K562 (cell line): ENCODE measurements at regions of chr5 and their contacts with region 1.

Region 1: DNA sequence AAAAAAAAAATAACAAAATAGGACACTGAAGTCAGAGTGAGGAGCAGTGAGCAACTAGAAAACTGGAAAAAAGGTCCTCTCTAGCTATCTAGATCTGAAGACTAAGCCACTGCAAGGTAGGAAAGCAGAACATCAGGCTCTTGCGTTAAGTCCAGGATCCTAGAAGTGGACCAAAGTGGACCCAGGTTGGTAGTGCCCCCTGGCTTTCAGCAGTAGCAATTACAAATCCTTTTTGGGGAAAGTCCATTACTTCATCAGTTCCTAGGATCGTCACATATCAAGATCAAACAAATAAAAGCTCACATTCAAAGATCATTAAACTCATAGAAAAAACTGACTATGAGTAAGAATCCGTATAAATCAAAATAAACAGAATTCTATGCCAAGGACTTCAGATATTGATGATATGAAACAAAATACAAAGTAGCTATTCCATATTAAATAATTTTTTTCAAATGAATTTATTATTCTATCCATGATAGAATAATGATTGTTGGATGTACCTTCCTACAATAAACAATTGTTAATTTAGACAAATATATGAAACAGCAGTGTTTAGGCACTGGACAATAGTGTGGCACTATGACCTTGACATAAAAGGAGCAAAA is 6.5 kb upstream of the RICTOR start:
- DNase-seq: peak; percentile 63 to 85 (median 74)
- ATAC-seq: peak; percentile 80
- H3K4me3 ChIP-seq: no peak overlapping the region
- H3K27ac ChIP-seq: no peak overlapping the region
- H3K4me1 ChIP-seq: peaks cover 0 to 4% of the 10 kb centered on the region in 2 experiments; a peak in 2 of 5 replicates
- H3K27me3 ChIP-seq: no peaks in the 10 kb centered on the region
- CTCF ChIP-seq: peak; percentile 82 to 94 (median 93)
- EP300 ChIP-seq: no peak; the same call in 1 of the 2 replicates
- POLR2A ChIP-seq: no peak
- RAD21 ChIP-seq: peak; percentile 80 to 91

Region 2: GRCh38 chr5:38441453-38442246 is 639.1 kb before region 1 on chr5:
- CTCF ChIA-PET with region 1: no interaction called
- POLR2A ChIA-PET with region 1: no interaction called
- in situ Hi-C with region 1: no loop called
- intact Hi-C with region 1: loop called (anchors 10 kb)
- DNase-seq: peak; percentile 87 to 92 (median 88)
- ATAC-seq: peak; percentile 100
- H3K4me3 ChIP-seq: no peak overlapping the region
- H3K27ac ChIP-seq: no peak overlapping the region
- H3K4me1 ChIP-seq: peaks cover 0 to 6% of the 10 kb centered on the region in 2 experiments; a peak in 1 of 5 replicates
- H3K27me3 ChIP-seq: peaks cover 9 to 35% of the 10 kb centered on the region in 2 experiments; a peak in 4 of 5 replicates
- CTCF ChIP-seq: peak; percentile 96 to 98 (median 98)
- EP300 ChIP-seq: no peak
- POLR2A ChIP-seq: no peak
- RAD21 ChIP-seq: peak; percentile 98 to 99

Region 3: DNA sequence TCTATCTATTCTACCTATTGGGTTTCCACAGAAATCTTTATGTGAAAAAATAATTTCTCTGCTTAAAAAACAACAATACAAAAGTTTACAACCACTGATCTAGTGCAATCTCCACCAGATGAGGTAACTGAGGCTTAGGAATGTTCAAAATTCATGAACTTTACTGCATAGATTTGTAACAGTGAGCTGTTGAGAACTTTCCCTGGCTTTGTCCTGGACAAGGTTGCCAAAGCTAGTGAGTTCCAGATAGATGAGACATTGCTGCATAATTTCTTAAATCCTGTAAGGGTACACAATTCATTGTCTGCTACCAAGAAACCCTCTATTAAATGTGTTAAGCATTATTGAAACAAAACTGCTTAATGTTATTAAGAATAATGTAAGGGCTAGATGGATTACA is 132.2 kb before region 1 on chr5:
- CTCF ChIA-PET with region 1: no interaction called
- POLR2A ChIA-PET with region 1: no interaction called
- in situ Hi-C with region 1: no loop called
- intact Hi-C with region 1: loop called (anchors 10 kb)
- DNase-seq: no peak
- ATAC-seq: no peak
- H3K4me3 ChIP-seq: no peak overlapping the region
- H3K27ac ChIP-seq: no peak overlapping the region
- H3K4me1 ChIP-seq: no peaks in the 10 kb centered on the region
- H3K27me3 ChIP-seq: no peaks in the 10 kb centered on the region
- CTCF ChIP-seq: no peak
- EP300 ChIP-seq: no peak
- POLR2A ChIP-seq: no peak
- RAD21 ChIP-seq: no peak

Region 4: DNA sequence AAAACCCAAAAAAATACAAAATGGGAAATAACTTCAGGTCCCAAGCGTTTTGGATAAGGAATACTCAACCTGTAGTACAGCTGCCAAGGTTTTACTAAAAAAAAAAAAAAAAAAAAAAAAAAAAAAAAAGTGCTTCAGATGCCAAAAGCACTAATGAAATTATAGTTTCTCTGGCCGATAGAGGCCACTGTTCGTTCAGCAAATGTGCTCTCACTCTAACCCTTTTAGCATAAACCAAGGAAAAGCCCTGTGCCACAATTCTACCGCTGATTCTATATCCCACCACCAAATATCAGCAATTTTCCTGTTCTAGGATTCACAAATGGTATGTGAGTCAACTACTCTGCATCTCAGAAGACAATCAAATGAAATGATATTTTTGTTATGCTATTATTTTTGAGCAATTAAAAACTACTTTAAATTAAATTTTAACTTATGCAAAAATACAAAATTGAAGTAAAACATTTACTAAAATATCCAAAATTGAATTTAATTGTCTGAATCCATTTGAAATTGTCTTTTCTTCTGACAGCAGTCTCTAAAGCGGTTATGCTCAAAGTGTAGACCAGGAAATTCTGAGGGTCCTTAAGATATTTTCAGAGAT is 86.3 kb before region 1 on chr5:
- CTCF ChIA-PET with region 1: no interaction called
- POLR2A ChIA-PET with region 1: no interaction called
- in situ Hi-C with region 1: no loop called
- intact Hi-C with region 1: loop called (anchors 1 kb)
- DNase-seq: peak; percentile 18 to 70 (median 32)
- ATAC-seq: peak; percentile 93
- H3K4me3 ChIP-seq: no peak overlapping the region
- H3K27ac ChIP-seq: no peak overlapping the region
- H3K4me1 ChIP-seq: no peaks in the 10 kb centered on the region
- H3K27me3 ChIP-seq: no peaks in the 10 kb centered on the region
- CTCF ChIP-seq: peak; percentile 55 to 70 (median 57)
- EP300 ChIP-seq: no peak
- POLR2A ChIP-seq: no peak
- RAD21 ChIP-seq: peak in 1 of 2 experiments; percentile 65; a peak in 2 of 4 replicates

Region 5: GRCh38 chr5:39005566-39006232 is 75.0 kb before region 1 on chr5:
- CTCF ChIA-PET with region 1: interaction called, 4 read pairs
- POLR2A ChIA-PET with region 1: no interaction called
- in situ Hi-C with region 1: no loop called
- intact Hi-C with region 1: loop called (anchors 1 kb)
- DNase-seq: peak in 2 of 4 experiments; percentile 44 to 66
- ATAC-seq: peak; percentile 92
- H3K4me3 ChIP-seq: no peak overlapping the region
- H3K27ac ChIP-seq: peak overlapping the region; percentile 27; the same call in 1 of the 3 replicates
- H3K4me1 ChIP-seq: peaks cover 0 to 7% of the 10 kb centered on the region in 2 experiments; a peak in 2 of 5 replicates
- H3K27me3 ChIP-seq: no peaks in the 10 kb centered on the region
- CTCF ChIP-seq: peak; percentile 51 to 71 (median 70)
- EP300 ChIP-seq: no peak
- POLR2A ChIP-seq: no peak
- RAD21 ChIP-seq: peak; percentile 67 to 85

Region 6: GRCh38 chr5:39283231-39283818 is 202.6 kb after region 1 on chr5:
- CTCF ChIA-PET with region 1: no interaction called
- POLR2A ChIA-PET with region 1: no interaction called
- in situ Hi-C with region 1: no loop called
- intact Hi-C with region 1: loop called (anchors 5 kb)
- DNase-seq: peak; percentile 33 to 84 (median 57)
- ATAC-seq: peak; percentile 100
- H3K4me3 ChIP-seq: no peak overlapping the region
- H3K27ac ChIP-seq: no peak overlapping the region
- H3K4me1 ChIP-seq: no peaks in the 10 kb centered on the region; a peak in 1 of 5 replicates
- H3K27me3 ChIP-seq: no peaks in the 10 kb centered on the region
- CTCF ChIP-seq: peak; percentile 78 to 94 (median 80)
- EP300 ChIP-seq: 0 out of 2 replicates have a peak, but pooled peaks have one; percentile 26
- POLR2A ChIP-seq: no peak
- RAD21 ChIP-seq: peak; percentile 98 to 99